ENCODE measurements at regions of chr6 and their contacts with region 1.

Region 1: DNA sequence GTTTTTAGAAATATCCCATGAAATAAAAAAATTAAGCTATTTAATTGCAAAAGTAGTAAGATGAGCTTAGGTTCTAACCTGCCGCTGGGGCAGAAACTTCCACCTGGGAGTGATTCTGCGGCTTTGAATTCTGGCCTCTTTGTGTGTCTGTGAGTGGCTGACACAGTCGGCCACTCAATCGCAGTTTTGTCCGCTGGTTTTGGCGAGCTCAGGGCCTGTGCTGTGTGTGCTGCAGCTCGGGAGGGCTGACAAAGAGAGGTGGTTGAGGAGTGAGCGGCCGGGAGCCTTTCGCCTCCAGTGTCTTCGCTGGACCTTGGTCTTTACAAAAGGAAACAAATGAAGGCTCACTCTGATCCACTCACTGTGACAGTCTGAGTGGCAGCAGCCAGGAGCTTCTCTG is 128.4 kb downstream of the TIAM2 start:
- DNase-seq: no peak

Region 2: GRCh38 chr6:155155787-155156447 is 32.4 kb after region 1 on chr6:
- intact Hi-C with region 1: loop called in 1 of 2 experiments (anchors 1 kb)
- DNase-seq: no peak

Region 3: GRCh38 chr6:155472886-155473285 is 349.4 kb after region 1 on chr6:
- intact Hi-C with region 1: no loop called
- DNase-seq: no peak

Region 4: GRCh38 chr6:155807243-155807642 is 683.7 kb after region 1 on chr6:
- intact Hi-C with region 1: no loop called
- DNase-seq: no peak

Region 5: GRCh38 chr6:156485150-156485549 is 1361.6 kb after region 1 on chr6:
- intact Hi-C with region 1: no loop called
- DNase-seq: no peak